B cell (primary cell): ENCODE measurements at regions of chr4 and their contacts with region 1.

Region 1: GRCh38 chr4:12729384-12729783 is 754.8 kb downstream of the RAB28 start:
- DNase-seq: peak; percentile 22
- ATAC-seq: no peak
- H3K4me3 ChIP-seq: no peak overlapping the region
- H3K4me3 Mint-ChIP-seq: no peak overlapping the region
- H3K27ac ChIP-seq: no peak overlapping the region
- H3K27ac Mint-ChIP-seq: no peak overlapping the region
- H3K4me1 ChIP-seq: no peaks in the 10 kb centered on the region
- H3K4me1 Mint-ChIP-seq: peaks cover 2% of the 10 kb centered on the region
- H3K27me3 ChIP-seq: no peaks in the 10 kb centered on the region
- H3K27me3 Mint-ChIP-seq: peaks cover 16% of the 10 kb centered on the region
- CTCF ChIP-seq: peak; percentile 73

Region 2: DNA sequence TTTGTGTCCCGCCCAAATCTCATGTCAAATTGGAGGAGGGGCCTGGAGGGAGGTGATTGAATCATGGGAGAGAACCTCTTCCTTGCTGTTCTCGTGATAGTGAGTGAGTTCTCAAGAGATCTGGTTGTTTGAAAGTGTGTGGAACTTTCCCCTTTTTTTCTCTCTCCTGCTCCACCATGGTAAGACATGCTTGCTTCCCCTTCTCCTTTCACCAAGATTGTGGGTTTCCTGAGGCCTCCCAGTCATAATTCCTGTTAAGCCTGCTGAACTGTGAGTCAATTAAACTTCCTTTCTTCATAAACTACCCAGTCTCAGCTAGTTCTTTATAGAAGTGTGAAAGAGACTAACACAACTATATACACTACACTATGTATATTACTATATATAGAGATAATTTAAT is 602.9 kb before region 1 on chr4:
- CTCF ChIA-PET with region 1: no interaction called
- POLR2A ChIA-PET with region 1: no interaction called
- intact Hi-C with region 1: no loop called
- DNase-seq: no peak
- ATAC-seq: no peak
- H3K4me3 ChIP-seq: no peak overlapping the region
- H3K4me3 Mint-ChIP-seq: no peak overlapping the region
- H3K27ac ChIP-seq: no peak overlapping the region
- H3K27ac Mint-ChIP-seq: no peak overlapping the region
- H3K4me1 ChIP-seq: no peaks in the 10 kb centered on the region
- H3K4me1 Mint-ChIP-seq: no peaks in the 10 kb centered on the region
- H3K27me3 ChIP-seq: no peaks in the 10 kb centered on the region
- H3K27me3 Mint-ChIP-seq: no peaks in the 10 kb centered on the region
- CTCF ChIP-seq: no peak

Region 3: GRCh38 chr4:12993923-12994322 is 264.5 kb after region 1 on chr4:
- CTCF ChIA-PET with region 1: no interaction called
- POLR2A ChIA-PET with region 1: no interaction called
- intact Hi-C with region 1: no loop called
- DNase-seq: no peak
- ATAC-seq: no peak
- H3K4me3 ChIP-seq: no peak overlapping the region
- H3K4me3 Mint-ChIP-seq: no peak overlapping the region
- H3K27ac ChIP-seq: no peak overlapping the region
- H3K27ac Mint-ChIP-seq: no peak overlapping the region
- H3K4me1 ChIP-seq: no peaks in the 10 kb centered on the region
- H3K4me1 Mint-ChIP-seq: no peaks in the 10 kb centered on the region
- H3K27me3 ChIP-seq: no peaks in the 10 kb centered on the region
- H3K27me3 Mint-ChIP-seq: no peaks in the 10 kb centered on the region
- CTCF ChIP-seq: no peak

Region 4: DNA sequence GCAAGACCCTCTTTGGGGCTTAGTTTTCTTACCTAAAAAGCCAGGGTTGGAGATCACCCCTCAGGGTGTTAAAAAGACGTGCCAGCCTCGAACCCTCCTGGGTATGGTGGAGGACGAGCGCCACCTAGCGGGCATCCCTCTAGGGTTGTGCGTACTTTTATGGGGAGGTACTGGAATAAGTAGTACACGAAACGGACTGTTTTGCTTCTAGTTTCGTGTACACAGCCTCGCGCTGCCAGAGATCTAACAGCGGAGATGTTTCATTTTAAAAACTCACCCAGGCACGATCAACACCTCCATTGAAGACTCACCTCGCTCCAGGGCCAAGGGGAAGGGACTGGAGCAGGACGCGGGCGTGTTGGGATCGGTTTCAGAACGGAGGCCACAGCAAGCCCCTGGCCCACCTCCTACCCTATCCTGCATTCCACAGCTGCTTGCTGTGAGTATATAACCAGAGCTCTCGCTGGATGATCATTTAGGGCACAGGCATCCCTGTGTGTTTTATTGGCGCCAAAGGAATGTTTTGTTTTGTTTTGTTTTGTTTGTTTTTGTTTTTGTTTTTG is 819.7 kb after region 1 on chr4:
- CTCF ChIA-PET with region 1: interaction called, 12 read pairs
- POLR2A ChIA-PET with region 1: no interaction called
- intact Hi-C with region 1: no loop called
- DNase-seq: peak; percentile 86
- ATAC-seq: peak; percentile 65
- H3K4me3 ChIP-seq: peak overlapping the region; percentile 3 to 41 (median 31)
- H3K4me3 Mint-ChIP-seq: peak overlapping the region; percentile 77
- H3K27ac ChIP-seq: no peak overlapping the region
- H3K27ac Mint-ChIP-seq: peak overlapping the region; percentile 55
- H3K4me1 ChIP-seq: peaks cover 40 to 44% of the 10 kb centered on the region in 2 donors
- H3K4me1 Mint-ChIP-seq: peaks cover 31% of the 10 kb centered on the region
- H3K27me3 ChIP-seq: peaks cover 2 to 59% (median 47%) of the 10 kb centered on the region in 4 experiments
- H3K27me3 Mint-ChIP-seq: peaks cover 65% of the 10 kb centered on the region
- CTCF ChIP-seq: peak; percentile 89